ENCODE measurements at regions of chr1 and their contacts with region 1.

Region 1: GRCh38 chr1:110312188-110313121 is 26.7 kb upstream of the RBM15 start:
- DNase-seq: peak; percentile 68
- H3K4me3 ChIP-seq: no peak overlapping the region
- H3K27ac ChIP-seq: no peak overlapping the region
- H3K4me1 ChIP-seq: no peaks in the 10 kb centered on the region
- CTCF ChIP-seq: peak; percentile 87

Region 2: GRCh38 chr1:110203021-110203661 is 109.3 kb before region 1 on chr1:
- CTCF ChIA-PET with region 1: interaction called, 32 read pairs
- POLR2A ChIA-PET with region 1: interaction called, 5 read pairs
- intact Hi-C with region 1: loop called (anchors 1 kb)
- DNase-seq: peak; percentile 75
- H3K4me3 ChIP-seq: no peak overlapping the region
- H3K27ac ChIP-seq: no peak overlapping the region
- H3K4me1 ChIP-seq: peaks cover 6% of the 10 kb centered on the region
- CTCF ChIP-seq: peak; percentile 95